KBM-7 (cell line): ENCODE measurements at regions of chr17 and their contacts with region 1.

Region 1: DNA sequence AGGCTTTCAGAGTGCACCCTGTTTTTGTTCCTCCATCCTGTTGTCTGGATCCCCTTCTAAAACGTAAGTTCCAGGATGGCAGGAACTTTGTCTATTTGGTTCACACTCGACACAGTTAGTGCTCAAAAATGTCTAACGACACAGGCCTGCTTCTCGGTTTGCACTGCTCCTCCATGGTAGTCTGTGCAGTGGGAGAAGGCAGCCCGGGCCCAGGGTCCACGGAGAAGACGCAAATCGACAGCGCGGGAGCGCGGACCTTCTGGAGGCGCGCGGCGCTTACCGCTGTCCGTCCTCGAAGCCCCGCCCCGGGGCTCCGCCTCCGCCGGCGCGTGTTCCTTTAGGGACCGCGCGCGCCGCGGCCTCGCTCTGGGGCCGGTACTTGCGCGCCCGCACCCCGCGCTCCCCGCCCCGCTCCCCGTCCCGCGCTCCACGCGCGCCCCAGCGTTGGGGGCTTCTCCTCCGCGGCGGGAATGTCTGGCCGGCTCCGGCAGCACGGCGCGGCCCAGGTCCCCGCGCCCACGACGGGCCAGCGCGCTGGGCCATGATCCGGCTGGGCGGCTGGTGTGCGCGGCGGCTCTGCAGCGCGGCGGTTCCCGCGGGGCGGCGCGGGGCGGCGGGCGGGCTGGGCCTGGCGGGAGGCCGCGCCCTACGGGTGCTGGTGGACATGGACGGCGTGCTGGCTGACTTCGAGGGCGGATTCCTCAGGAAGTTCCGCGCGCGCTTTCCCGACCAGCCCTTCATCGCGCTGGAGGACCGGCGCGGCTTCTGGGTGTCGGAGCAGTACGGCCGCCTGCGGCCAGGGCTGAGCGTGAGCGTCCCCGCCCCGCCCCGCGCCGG is at the start of gene NT5M:
- DNase-seq: peak; percentile 75

Region 2: DNA sequence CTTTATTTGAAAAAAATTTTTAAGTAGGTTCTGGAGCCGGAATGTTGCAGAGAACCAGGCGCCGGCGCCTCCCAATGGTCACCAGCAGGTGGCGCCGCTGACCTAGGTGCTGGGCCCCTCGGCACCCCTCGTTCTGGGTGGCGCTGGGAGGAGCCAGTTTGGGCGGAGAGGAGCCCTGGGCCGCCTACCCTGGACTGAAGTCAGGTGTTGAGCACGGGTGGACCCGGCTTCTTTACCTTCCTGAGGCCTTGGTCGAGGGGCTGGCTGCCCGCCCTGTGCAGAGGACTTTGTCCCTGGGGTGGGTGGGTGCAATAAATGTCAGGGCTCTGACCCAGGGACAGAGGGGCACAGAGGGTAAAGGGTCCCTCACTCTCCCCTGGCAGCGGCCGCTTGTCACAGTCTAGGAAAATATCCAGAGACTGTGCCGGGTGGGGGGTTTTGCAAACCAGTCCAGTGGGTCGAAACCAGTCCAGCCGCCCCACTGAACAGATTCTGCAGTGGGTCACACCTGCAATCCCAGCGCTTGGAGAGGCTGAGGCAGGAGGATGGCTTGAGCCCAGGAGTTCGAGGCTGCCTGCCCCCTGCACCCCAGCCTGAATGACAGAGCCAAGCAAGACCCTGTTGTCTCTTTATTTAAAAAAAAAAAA is 301.2 kb before region 1 on chr17:
- in situ Hi-C with region 1: loop called (anchors 25 kb)
- DNase-seq: peak; percentile 75